Activated CD4-positive, alpha-beta T cell treated with anti-CD3 and anti-CD28 coated beads for 36 hours (primary cell): ENCODE measurements at regions of chr9 and their contacts with region 1.

Region 1: GRCh38 chr9:136363606-136364370 is at the start of gene DNLZ:
- DNase-seq: peak; percentile 93
- ATAC-seq: peak; percentile 73
- H3K4me3 Mint-ChIP-seq: peak within 1 kb of the TSS; percentile 79
- H3K27ac Mint-ChIP-seq: peak within 1 kb of the TSS; percentile 80
- H3K4me1 Mint-ChIP-seq: peaks cover 10% of the 10 kb centered on the region
- H3K27me3 Mint-ChIP-seq: no peaks in the 10 kb centered on the region
- total RNA-seq, gene DNLZ: 11.7 to 12.8 TPM

Region 2: GRCh38 chr9:135961277-135961705 is 402.5 kb before region 1 on chr9 and contains the start of gene UBAC1:
- CTCF ChIA-PET with region 1: no interaction called
- POLR2A ChIA-PET with region 1: no interaction called
- intact Hi-C with region 1: loop called in 1 of 2 experiments (anchors 1 kb)
- DNase-seq: peak; percentile 98
- ATAC-seq: peak; percentile 92
- H3K4me3 Mint-ChIP-seq: peak within 1 kb of the TSS; percentile 87
- H3K27ac Mint-ChIP-seq: peak within 1 kb of the TSS; percentile 73
- H3K4me1 Mint-ChIP-seq: peaks cover 32% of the 10 kb centered on the region
- H3K27me3 Mint-ChIP-seq: no peaks in the 10 kb centered on the region
- total RNA-seq, gene UBAC1: 41.7 to 42.8 TPM

Region 3: GRCh38 chr9:136245219-136246150 is 118.3 kb before region 1 on chr9 and contains the start of gene QSOX2:
- CTCF ChIA-PET with region 1: no interaction called
- POLR2A ChIA-PET with region 1: no interaction called
- intact Hi-C with region 1: loop called in 1 of 2 experiments (anchors 1 kb)
- DNase-seq: peak; percentile 94
- ATAC-seq: peak; percentile 61
- H3K4me3 Mint-ChIP-seq: peak within 1 kb of the TSS; percentile 85
- H3K27ac Mint-ChIP-seq: peak within 1 kb of the TSS; percentile 95
- H3K4me1 Mint-ChIP-seq: peaks cover 28% of the 10 kb centered on the region
- H3K27me3 Mint-ChIP-seq: no peaks in the 10 kb centered on the region
- total RNA-seq, gene QSOX2: 18.1 to 21.2 TPM

Region 4: DNA sequence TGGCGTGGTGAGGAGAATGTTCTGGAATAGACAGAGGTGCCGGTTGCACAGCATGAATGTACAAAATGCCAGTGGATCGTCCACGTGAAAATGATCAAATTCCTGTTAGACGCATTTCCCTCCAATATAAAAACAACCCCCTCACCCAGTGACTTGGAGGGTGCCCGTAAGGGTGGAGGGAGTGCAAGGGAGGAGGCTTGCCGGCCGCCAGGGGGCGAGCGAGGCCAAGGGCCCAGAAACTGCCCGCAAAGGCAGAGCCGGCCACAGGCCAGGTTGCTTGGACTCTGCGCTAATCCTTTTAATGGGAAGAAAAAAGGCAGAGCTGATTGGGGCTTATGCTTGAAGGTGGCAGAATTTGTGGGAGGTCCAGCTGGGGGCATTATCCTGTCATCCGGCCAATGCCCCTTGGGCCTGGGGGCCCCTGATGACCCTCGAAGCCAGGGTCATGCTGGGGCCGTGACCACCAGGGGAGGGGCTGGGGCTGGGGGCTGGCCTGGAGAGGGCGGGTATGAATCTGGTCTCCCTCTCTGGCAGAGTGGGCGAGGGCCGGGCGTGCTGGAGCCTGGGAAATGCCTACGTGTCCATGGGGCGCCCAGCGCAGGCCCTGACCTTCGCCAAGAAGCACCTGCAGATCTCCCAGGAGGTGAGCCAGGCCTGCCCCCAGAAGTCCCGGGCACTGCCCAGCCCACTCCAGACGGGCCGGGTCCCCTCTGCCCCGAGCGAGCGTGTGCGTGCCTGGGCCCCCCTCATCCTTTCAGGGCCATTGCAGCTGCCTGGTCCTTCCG is 24.4 kb before region 1 on chr9:
- CTCF ChIA-PET with region 1: no interaction called
- POLR2A ChIA-PET with region 1: no interaction called
- intact Hi-C with region 1: loop called in 1 of 2 experiments (anchors 1 kb)
- DNase-seq: peak; percentile 59
- ATAC-seq: no peak
- H3K4me3 Mint-ChIP-seq: no peak overlapping the region
- H3K27ac Mint-ChIP-seq: no peak overlapping the region
- H3K4me1 Mint-ChIP-seq: no peaks in the 10 kb centered on the region
- H3K27me3 Mint-ChIP-seq: no peaks in the 10 kb centered on the region

Region 5: DNA sequence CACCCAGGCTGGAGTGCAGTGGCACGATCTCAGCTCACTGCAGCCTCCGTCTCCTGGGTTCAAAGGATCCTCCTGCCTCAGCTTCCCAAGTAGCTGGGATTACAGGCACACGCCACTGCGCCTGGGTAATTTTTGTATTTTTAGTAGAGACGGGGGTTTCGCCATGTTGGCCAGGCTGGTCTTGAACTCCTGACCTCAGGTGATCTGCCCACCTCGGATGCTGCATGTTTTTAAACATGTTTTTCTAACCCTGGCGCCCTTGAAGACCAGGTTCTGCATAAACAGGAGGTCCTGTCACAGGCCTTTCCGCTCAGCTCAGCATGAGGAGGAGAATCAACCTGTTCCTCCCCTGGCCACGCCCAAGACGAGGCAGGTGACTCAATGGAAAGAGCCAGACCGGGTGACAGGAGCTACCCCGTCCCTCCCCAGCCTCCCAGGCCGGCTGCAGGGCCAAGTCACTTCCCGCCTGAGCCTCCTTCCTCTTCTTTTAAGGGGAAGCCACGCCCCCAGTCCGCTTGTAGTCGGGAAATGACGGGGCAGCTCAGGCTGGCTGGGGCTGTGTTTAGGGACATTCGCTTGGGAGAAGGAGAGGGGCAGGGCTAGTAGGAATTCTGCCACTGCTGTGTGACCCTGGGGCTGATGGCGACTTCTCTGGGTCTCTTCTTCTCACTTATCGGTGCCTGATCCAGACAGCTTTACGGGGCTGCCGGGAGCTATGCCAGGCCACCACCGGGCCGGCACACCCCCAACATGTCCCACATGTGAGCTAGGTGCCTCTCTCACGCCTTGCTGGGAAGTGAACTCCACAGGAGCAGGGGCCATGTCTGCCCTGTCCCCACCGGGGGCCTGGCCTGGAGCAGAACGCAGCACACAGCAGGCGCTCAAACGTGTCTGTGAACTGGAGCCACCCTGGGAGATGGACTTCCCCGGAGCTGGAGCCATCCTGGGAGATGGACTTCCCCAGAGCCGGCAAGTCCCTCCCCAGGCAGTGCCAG is 175.9 kb after region 1 on chr9:
- CTCF ChIA-PET with region 1: no interaction called
- POLR2A ChIA-PET with region 1: interaction called, 5 read pairs
- intact Hi-C with region 1: loop called in 1 of 2 experiments (anchors 1 kb)
- DNase-seq: peak; percentile 99
- ATAC-seq: peak; percentile 81
- H3K4me3 Mint-ChIP-seq: peak overlapping the region; percentile 65
- H3K27ac Mint-ChIP-seq: peak overlapping the region; percentile 99
- H3K4me1 Mint-ChIP-seq: peaks cover 74% of the 10 kb centered on the region
- H3K27me3 Mint-ChIP-seq: no peaks in the 10 kb centered on the region

Region 6: GRCh38 chr9:136944519-136945279 is 580.9 kb after region 1 on chr9 and contains the starts of genes C8G and FBXW5:
- CTCF ChIA-PET with region 1: no interaction called
- POLR2A ChIA-PET with region 1: no interaction called
- intact Hi-C with region 1: loop called in 1 of 2 experiments (anchors 1 kb)
- DNase-seq: peak; percentile 97
- ATAC-seq: peak; percentile 84
- H3K4me3 Mint-ChIP-seq: peak within 1 kb of the TSS; percentile 77
- H3K27ac Mint-ChIP-seq: peak within 1 kb of the TSS; percentile 88
- H3K4me1 Mint-ChIP-seq: peaks cover 9% of the 10 kb centered on the region
- H3K27me3 Mint-ChIP-seq: no peaks in the 10 kb centered on the region
- total RNA-seq, gene C8G: 0.77 TPM in 1 of 2 experiments, not detected in the other
- total RNA-seq, gene FBXW5: 54.4 to 66.4 TPM